GM12878 (cell line): ENCODE measurements at regions of chr6 and their contacts with region 1.

Region 1: GRCh38 chr6:18330548-18331081 is 56.5 kb upstream of the RNF144B start:
- DNase-seq: no peak
- ATAC-seq: peak; percentile 65
- H3K4me3 ChIP-seq: no peak overlapping the region
- H3K27ac ChIP-seq: no peak overlapping the region
- H3K4me1 ChIP-seq: peaks cover 18% of the 10 kb centered on the region; the same call in 1 of the 2 replicates
- H3K27me3 ChIP-seq: no peaks in the 10 kb centered on the region
- CTCF ChIP-seq: no peak
- EP300 ChIP-seq: no peak
- POLR2A ChIP-seq: no peak
- RAD21 ChIP-seq: no peak

Region 2: DNA sequence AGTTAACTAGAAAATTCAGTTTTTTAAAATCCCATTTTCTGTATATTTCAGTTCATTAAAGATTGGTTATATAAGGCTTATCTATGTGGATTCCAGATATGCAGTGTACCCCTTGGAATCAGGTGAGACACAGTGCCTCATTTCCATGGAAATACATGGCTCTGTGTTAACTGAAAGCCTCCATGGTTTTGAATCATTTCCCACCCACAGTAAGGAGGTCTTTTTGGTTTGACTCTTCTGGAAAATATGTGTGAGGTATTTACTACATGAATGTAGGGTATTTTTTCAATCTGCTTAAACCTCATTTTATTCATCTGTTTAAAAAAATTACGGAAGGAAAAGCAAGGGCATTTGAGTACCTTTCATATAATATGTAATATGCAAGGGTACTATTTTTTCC is 82.0 kb after region 1 on chr6:
- CTCF ChIA-PET with region 1: no interaction called
- POLR2A ChIA-PET with region 1: no interaction called
- RAD21 ChIA-PET with region 1: no interaction called
- SMC1A ChIA-PET with region 1: no interaction called
- in situ Hi-C with region 1: no loop called
- intact Hi-C with region 1: no loop called
- DNase-seq: no peak
- ATAC-seq: no peak
- H3K4me3 ChIP-seq: no peak overlapping the region
- H3K27ac ChIP-seq: no peak overlapping the region
- H3K4me1 ChIP-seq: no peaks in the 10 kb centered on the region
- H3K27me3 ChIP-seq: no peaks in the 10 kb centered on the region
- CTCF ChIP-seq: no peak
- EP300 ChIP-seq: no peak
- POLR2A ChIP-seq: no peak
- RAD21 ChIP-seq: no peak

Region 3: GRCh38 chr6:18432180-18432579 is 101.6 kb after region 1 on chr6:
- CTCF ChIA-PET with region 1: no interaction called
- POLR2A ChIA-PET with region 1: no interaction called
- RAD21 ChIA-PET with region 1: no interaction called
- SMC1A ChIA-PET with region 1: no interaction called
- in situ Hi-C with region 1: no loop called
- intact Hi-C with region 1: no loop called
- DNase-seq: no peak
- ATAC-seq: no peak
- H3K4me3 ChIP-seq: no peak overlapping the region
- H3K27ac ChIP-seq: no peak overlapping the region
- H3K4me1 ChIP-seq: no peaks in the 10 kb centered on the region
- H3K27me3 ChIP-seq: no peaks in the 10 kb centered on the region
- CTCF ChIP-seq: no peak
- EP300 ChIP-seq: no peak
- POLR2A ChIP-seq: no peak
- RAD21 ChIP-seq: no peak

Region 4: DNA sequence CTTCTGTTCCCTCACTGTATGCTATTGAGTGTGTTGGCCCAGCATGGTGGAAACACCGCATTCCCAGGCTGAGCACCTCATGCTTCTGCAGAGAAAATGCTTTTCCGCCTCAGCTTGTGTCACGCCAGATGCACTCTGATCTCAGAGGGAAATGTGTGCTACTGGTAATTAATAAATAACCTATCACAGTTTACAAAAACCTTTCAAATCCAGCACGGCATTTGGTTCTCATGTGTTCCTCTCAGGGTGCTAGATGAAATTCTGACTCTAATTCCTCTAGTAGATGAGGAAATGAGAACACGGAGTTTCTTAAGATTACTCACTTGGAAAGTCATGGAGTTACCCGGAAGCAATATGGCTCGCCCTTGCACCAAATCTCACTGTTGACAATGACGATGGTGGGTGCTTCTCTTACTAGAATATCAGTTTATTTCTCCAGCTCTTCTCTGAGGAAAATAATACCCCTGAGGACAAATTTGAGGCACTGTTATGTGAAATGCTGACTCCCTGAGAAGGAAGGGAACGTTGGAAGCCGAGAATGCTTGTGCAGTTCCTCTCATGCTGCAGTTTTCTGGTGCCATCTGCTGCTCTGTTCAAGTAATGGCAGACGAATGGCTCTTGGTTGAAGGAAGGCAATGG is 173.1 kb after region 1 on chr6:
- CTCF ChIA-PET with region 1: interaction called, 126 read pairs
- POLR2A ChIA-PET with region 1: no interaction called
- RAD21 ChIA-PET with region 1: interaction called, 17 read pairs
- SMC1A ChIA-PET with region 1: interaction called, 14 read pairs
- in situ Hi-C with region 1: loop called (anchors 5 kb)
- intact Hi-C with region 1: no loop called
- DNase-seq: peak; percentile 35
- ATAC-seq: peak; percentile 94
- H3K4me3 ChIP-seq: no peak overlapping the region
- H3K27ac ChIP-seq: no peak overlapping the region
- H3K4me1 ChIP-seq: no peaks in the 10 kb centered on the region
- H3K27me3 ChIP-seq: no peaks in the 10 kb centered on the region
- CTCF ChIP-seq: peak; percentile 87 to 96 (median 90); a peak in 5 of 6 replicates
- EP300 ChIP-seq: peak in 1 of 2 experiments; percentile 16; a peak in 1 of 4 replicates
- POLR2A ChIP-seq: no peak
- RAD21 ChIP-seq: peak; percentile 100

Region 5: DNA sequence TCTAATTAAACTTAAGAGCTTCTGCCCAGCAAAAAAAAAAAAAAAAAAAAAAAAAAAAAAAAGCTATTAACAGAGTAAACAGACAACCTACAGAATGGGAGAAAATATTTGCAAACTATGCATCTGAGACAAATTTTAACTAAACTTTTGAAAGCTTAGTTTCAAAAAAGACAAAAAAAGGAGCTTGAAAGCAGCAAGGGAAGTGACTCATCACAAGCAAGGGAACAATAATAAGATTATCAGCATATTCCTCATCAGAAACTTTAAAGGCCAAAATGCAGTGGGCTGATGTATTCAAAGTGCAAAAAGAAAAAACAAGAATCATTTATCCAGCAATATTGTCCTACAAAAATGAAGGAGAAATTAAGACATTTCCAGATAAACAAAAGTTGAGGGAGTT is 215.1 kb after region 1 on chr6:
- CTCF ChIA-PET with region 1: no interaction called
- POLR2A ChIA-PET with region 1: no interaction called
- RAD21 ChIA-PET with region 1: no interaction called
- SMC1A ChIA-PET with region 1: no interaction called
- in situ Hi-C with region 1: no loop called
- intact Hi-C with region 1: no loop called
- DNase-seq: no peak
- ATAC-seq: no peak
- H3K4me3 ChIP-seq: no peak overlapping the region
- H3K27ac ChIP-seq: no peak overlapping the region
- H3K4me1 ChIP-seq: no peaks in the 10 kb centered on the region
- H3K27me3 ChIP-seq: no peaks in the 10 kb centered on the region; a peak in 1 of 4 replicates
- CTCF ChIP-seq: no peak
- EP300 ChIP-seq: no peak
- POLR2A ChIP-seq: no peak
- RAD21 ChIP-seq: no peak